Heart left ventricle (tissue), 16 donors: ENCODE measurements at regions of chr1 and their contacts with region 1.

Region 1: DNA sequence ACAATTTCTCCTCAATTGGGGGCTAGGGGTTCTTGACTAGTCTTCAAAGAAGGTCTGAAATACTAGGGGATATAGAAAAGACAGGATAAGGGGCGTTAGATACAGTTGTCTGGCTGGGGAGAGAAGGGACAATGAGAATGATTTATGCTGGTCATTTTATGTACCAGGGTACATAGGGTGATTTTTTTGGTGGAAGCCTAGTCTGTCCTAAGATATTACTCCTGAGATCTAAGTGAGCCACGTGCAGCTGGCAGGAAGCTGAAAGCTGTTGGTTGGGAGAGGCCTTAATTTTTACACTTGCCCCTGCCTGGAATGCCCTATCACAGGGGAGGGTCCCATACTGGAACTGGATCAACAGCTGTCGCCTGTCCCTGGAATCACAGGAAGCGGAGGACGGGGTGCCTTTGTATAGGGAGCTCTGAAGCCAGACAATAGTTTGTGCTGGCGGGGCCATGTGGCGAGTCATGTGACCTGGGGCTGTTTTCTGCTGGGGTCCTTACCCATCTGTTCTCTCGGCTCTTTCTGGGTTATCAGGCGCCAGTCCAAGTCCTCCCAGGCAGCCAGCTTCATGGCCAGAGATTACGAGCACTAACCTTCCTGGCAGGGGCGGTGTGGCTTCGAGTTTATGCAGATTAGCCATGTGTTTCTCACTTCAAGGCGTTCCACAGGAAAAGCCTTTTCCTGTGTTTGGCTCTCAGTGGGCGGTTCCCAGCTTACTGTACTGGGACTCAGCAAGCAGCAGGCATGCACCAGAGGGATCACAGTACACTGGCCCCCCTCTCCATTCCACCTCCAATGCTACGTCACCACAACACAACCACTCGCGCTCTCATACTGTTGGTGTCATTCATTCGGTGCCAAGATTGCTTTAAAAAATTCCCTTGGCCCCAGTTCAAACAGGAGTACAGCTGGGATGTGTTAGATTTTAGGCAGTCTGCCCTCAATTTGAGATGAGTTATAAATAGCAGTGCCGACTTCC is 27.5 kb downstream of the ARID1A start:
- DNase-seq: peak; percentile 84 to 94 (median 91)
- ATAC-seq: peak; percentile 98
- H3K4me3 ChIP-seq: peak overlapping the region in 7 of 12 donors; percentile 4 to 39 (median 15)
- H3K27ac ChIP-seq: peak overlapping the region in 11 of 12 donors; percentile 38 to 72 (median 61)
- H3K4me1 ChIP-seq: peaks cover 28 to 100% (median 87%) of the 10 kb centered on the region in 12 donors
- H3K27me3 ChIP-seq: no peaks in the 10 kb centered on the region
- CTCF ChIP-seq: no peak
- POLR2A ChIP-seq: no peak

Region 2: DNA sequence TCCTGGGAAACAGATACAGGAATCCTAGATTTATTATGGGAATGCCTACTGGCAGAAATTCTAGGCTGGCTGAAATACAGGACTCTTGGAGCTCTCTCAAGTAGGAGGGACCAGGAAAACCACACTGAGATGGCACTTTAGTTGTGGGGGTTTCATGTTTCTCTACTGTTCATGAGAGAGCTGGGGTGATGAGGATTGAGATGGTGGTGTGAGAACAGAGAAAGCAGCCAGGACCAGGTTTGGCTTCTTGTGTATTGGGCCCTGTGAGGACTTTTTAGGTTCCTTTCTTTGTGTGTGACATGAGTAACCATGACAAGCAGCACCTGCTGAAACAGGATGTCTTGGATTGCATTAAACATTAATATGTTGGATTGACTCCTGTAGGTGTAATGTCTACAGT is 22.6 kb before region 1 on chr1:
- intact Hi-C with region 1: loop called in 3 of 10 experiments (anchors 2 kb)
- DNase-seq: no peak
- ATAC-seq: no peak
- H3K4me3 ChIP-seq: peak overlapping the region in 4 of 12 donors; percentile 5 to 94 (median 18)
- H3K27ac ChIP-seq: peak overlapping the region in 4 of 12 donors; percentile 2 to 21 (median 12)
- H3K4me1 ChIP-seq: peaks cover 21 to 76% (median 73%) of the 10 kb centered on the region in 12 donors
- H3K27me3 ChIP-seq: no peaks in the 10 kb centered on the region
- CTCF ChIP-seq: no peak
- POLR2A ChIP-seq: no peak

Region 3: DNA sequence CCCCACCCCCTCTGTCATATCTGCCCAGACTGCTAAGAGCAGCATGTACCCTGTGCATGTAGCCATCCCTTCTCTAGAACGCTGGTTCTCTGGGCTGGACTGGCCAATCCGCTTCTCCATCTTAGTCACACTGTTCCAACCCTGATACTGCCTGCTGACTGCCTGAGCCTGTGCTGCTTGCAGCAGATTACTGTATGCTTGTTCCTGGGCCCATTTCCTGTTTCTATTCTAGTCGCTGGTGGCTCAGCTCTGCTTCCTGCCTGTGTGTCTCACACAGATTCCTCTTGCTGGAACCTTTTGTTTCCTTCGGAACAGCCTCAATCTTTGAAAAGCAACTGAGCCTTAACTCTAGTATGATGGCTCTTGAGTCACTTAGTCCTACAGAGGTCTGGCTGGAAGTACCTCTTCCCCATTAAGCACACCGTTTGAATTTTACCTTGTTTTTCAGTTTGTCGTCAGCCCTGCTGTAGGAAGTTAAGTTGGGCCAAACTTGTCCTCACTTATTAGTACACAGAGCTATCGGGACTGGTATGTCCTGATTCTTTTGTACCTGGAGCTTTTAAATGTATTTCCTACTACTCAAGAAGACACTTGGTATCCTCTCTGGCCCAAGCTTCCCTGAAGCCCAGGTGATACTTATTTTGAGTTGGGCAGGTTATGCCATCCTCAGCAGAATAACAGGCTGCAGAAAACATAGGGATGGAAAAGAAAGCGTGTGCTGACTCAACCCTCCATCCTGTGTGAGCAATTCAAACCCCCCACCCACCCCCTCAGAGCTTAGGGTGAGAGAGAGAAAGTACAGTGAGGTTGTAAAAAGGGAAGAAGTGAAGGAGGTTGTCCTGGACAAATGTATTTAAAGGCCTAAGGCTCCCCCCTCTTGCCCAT is 21.0 kb after region 1 on chr1:
- intact Hi-C with region 1: loop called in 2 of 10 experiments (anchors 1 to 2 kb)
- DNase-seq: peak; percentile 82 to 92 (median 87)
- ATAC-seq: peak; percentile 96 to 99 (median 98)
- H3K4me3 ChIP-seq: peak overlapping the region in 4 of 12 donors; percentile 6 to 40 (median 7)
- H3K27ac ChIP-seq: peak overlapping the region; percentile 75 to 94 (median 78)
- H3K4me1 ChIP-seq: peaks cover 11 to 99% (median 57%) of the 10 kb centered on the region in 12 donors
- H3K27me3 ChIP-seq: no peaks in the 10 kb centered on the region
- CTCF ChIP-seq: no peak
- POLR2A ChIP-seq: peak in 1 of 2 donors; percentile 44

Region 4: GRCh38 chr1:26771643-26772321 is 48.5 kb after region 1 on chr1:
- intact Hi-C with region 1: loop called in 3 of 10 experiments (anchors 5 kb)
- DNase-seq: peak in 1 of 5 donors; percentile 64
- ATAC-seq: peak; percentile 35 to 88 (median 79)
- H3K4me3 ChIP-seq: no peak overlapping the region
- H3K27ac ChIP-seq: peak overlapping the region in 6 of 12 donors; percentile 18 to 58 (median 38)
- H3K4me1 ChIP-seq: peaks cover 8 to 46% (median 30%) of the 10 kb centered on the region in 12 donors
- H3K27me3 ChIP-seq: no peaks in the 10 kb centered on the region
- CTCF ChIP-seq: no peak
- POLR2A ChIP-seq: no peak

Region 5: GRCh38 chr1:26993237-26994019 is 270.1 kb after region 1 on chr1 and contains the start of gene TRNP1:
- intact Hi-C with region 1: no loop called
- DNase-seq: peak; percentile 60 to 86 (median 74)
- ATAC-seq: peak; percentile 53 to 75 (median 70)
- H3K4me3 ChIP-seq: peak within 1 kb of the TSS; percentile 62 to 92 (median 68)
- H3K27ac ChIP-seq: peak within 1 kb of the TSS in 10 of 12 donors; percentile 46 to 79 (median 61)
- H3K4me1 ChIP-seq: peaks cover 6 to 44% (median 25%) of the 10 kb centered on the region in 12 donors
- H3K27me3 ChIP-seq: peaks cover 0 to 41% (median 13%) of the 10 kb centered on the region in 9 donors
- CTCF ChIP-seq: no peak
- POLR2A ChIP-seq: peak in 1 of 2 donors; percentile 50
- total RNA-seq, gene TRNP1: 16.6 to 68.5 (median 21.7) TPM